Cardiac septum (tissue), 1 donor: ENCODE measurements at regions of chr20 and their contacts with region 1.

Region 1: DNA sequence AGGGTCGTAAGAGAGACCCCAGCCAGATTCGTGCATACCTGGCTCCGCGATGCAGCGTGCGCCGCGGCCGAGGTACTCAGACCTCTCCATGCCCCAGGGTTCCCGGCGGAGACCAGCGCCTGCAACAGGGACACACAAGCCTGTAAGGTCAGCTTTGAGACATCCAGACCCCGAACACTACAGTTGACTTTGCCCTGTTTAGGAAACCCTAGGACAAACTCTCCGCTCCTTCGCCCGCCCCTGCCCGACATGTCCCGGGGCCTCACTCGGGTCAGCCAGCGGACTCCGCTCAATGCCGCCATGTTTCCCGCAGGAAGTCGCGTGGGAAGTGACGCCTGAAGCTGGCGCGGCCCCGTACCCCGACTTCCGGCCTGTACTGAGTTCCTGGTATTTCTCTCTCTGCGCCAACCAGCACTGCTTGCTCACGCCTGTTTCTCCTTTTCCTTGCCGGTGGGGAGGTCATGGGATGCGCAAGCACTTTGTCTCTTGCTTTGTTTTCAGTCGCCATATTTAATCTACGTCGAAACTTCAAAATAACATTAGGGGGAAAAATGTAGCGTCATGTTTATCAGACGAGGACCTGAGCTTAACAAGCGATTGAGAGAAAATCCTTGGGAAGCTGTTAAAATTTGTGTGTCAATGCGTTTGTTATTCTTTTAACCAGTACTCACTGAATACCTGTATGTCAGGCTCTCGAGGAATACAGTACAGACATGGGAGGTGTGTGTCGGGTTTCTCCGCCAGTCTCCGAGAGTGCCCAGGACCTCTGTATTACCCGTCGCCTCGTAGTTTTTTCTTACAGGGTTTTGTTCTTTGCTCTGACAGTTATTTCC is at the start of gene IDH3B:
- DNase-seq: peak; percentile 97
- total RNA-seq, gene IDH3B: 121 TPM

Region 2: DNA sequence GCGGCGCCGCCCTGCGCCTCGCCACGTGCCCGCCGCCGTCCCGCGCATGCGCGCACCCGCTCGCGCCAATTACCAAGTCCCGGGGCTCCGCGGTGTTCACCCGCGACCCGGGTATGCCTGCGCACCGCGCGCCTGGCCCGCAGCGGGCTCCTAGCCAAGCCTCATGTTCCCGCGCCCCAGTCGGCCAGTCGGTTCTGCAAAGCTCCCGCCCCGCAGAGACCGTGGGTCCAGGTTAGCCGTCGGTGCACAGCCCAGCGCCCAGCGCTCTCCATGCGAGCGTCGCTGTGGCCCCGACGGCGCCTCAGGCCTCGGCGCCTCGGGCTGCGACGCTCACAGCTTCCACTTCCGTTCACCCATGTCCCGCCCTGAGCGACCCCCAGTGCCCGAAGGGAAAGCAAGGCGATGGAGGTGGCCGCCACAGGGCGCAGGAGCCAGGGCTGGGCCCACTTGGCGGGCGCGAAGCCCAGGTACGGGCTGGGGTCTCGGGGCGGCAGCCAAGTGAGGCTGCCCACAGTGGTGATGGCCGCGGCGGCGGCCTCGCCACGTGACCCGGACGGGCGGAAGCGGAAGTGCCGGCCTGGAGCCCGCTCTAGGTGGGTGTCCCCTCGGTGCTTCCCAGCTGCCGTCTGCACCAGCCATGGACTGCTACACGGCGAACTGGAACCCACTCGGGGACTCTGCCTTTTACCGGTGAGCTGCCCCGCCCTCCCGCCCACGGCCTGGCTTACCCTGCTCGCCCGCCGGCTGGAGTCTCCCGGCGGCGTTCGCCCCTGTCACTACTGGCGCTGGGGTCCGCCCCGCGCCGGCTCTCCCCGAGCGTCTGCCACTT is 176.2 kb after region 1 on chr20 and contains the starts of genes PCED1A and VPS16:
- intact Hi-C with region 1: loop called (anchors 5 kb)
- DNase-seq: peak; percentile 95
- total RNA-seq, gene PCED1A: 12.8 TPM
- total RNA-seq, gene VPS16: 23.3 TPM